ENCODE measurements at regions of chr7 and their contacts with region 1.

Region 1: GRCh38 chr7:95723592-95724180 is 48.7 kb upstream of the DYNC1I1 start:
- DNase-seq: no peak
- H3K4me3 Mint-ChIP-seq: no peak overlapping the region
- H3K27ac Mint-ChIP-seq: no peak overlapping the region
- H3K4me1 Mint-ChIP-seq: no peaks in the 10 kb centered on the region
- H3K27me3 Mint-ChIP-seq: peaks cover 2% of the 10 kb centered on the region

Region 2: DNA sequence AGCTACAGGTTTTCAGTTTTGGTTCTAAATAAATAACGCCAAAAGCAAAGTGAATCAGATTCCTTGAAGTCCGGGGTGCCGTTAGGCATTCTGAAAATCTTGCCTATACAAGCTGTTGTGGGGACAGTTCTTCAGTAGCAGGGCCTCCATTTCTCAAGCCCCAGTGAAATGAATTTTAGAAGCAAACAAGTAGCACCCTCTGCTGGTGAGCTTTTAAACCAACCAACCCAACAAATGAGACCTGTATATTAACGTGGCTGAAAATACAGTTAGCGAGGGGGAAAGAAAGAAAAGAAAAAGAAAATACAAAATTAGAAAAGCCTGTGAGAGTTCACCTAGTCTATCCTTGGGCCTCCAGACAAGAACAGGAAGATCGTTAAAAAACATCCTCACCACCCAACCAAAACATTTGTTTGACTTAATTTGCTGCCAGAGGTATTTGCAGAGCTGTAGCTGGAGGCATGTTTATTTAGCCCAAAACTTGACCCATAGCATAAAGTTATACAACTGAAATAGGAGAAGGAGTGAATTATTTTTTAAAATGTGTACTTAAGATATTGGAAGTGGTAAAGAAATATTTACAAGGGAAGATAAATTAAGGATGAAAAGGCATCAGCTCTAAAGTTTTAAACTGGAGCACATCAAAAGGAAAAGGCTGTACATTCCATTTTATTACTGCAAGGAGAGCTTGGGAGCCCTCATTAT is 147.5 kb after region 1 on chr7:
- intact Hi-C with region 1: loop called (anchors 1 kb)
- DNase-seq: no peak
- H3K4me3 Mint-ChIP-seq: no peak overlapping the region
- H3K27ac Mint-ChIP-seq: no peak overlapping the region
- H3K4me1 Mint-ChIP-seq: no peaks in the 10 kb centered on the region
- H3K27me3 Mint-ChIP-seq: no peaks in the 10 kb centered on the region